Breast epithelium (tissue), 4 donors: ENCODE measurements at regions of chr19 and their contacts with region 1.

Region 1: GRCh38 chr19:15264061-15264932 is 32.0 kb upstream of the EPHX3 start:
- DNase-seq: peak; percentile 59 to 69
- H3K4me3 ChIP-seq: no peak overlapping the region
- H3K27ac ChIP-seq: peak overlapping the region; percentile 33 to 90
- H3K4me1 ChIP-seq: peaks cover 19 to 23% of the 10 kb centered on the region in 2 donors
- H3K27me3 ChIP-seq: no peaks in the 10 kb centered on the region
- CTCF ChIP-seq: peak; percentile 73 to 87 (median 75)
- POLR2A ChIP-seq: no peak

Region 2: DNA sequence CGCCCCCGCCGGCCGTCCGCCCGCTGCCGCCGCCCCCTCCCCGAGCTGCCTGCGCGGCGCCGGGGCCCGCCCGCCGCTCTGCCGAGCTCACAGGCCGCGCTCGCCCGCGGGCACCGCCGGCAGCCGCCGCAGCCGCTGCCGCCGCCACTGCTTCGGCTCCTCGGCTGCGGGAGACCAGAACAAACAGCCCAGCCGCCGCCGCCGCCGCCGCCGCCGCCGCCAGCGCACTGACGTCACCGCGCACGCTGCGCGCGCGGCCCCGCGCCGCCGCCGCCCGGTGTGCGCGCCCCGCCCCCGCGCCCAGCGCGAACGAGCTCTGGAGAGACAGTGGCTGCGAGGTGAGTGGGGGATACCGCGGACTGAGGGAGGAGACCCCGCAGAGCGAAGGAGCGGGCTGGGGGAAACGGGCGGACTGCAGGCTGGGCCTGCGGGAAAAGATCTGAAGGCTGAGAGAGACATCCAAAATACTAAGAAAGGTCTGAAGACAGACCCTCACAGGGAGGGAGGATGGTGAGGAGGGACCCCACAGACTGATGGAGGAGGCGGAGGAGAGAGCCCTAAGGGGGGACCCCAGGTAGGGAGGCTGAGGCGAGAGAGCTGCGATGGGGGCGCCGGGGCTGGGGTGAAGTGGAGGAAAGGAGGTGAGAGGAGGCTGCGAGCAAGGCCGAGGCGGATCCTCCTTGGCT is 68.2 kb after region 1 on chr19 and contains the start of gene BRD4:
- intact Hi-C with region 1: loop called (anchors 10 kb)
- DNase-seq: peak; percentile 50 to 65
- H3K4me3 ChIP-seq: peak within 1 kb of the TSS; percentile 70 to 98 (median 77)
- H3K27ac ChIP-seq: peak within 1 kb of the TSS; percentile 93 to 100
- H3K4me1 ChIP-seq: peaks cover 0 to 22% of the 10 kb centered on the region in 2 donors
- H3K27me3 ChIP-seq: no peaks in the 10 kb centered on the region
- CTCF ChIP-seq: no peak
- POLR2A ChIP-seq: no peak
- total RNA-seq, gene BRD4: 25.6 to 37.5 (median 33.8) TPM

Region 3: DNA sequence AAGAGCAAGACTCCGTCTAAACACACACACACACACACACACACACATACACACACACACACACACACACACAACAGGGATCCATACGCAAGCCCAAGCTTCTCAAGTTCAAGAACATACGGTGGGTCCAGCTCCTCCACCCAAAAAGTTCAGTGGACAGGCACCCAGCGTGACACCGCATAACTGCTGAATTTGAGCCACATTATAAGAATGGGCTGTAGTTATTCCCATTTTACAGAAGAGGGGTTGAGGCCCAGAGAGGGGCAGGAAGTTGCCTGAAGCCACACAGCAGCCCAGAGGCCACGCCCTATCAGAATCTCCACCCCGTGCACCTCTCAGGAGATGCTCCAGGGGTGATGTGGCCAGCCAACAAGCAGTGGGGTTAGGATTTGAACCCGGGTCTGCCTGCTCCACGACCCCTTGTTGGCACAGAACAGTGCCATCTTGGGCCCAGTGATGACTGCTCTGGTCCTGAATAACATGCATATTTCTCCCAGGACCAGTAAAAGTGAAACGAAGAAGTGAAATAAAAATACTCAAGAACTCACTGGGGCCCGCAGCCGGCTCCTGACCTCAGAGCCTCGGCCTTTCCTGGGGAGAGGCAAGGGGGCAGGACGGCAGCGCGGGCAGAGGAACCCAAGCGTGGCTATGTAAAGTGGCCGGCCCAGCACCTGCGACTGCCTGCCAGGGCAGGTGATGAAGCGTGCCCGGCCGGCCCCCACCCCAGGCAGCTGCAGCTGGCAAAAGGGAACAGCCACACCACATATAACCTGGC is 995.3 kb after region 1 on chr19:
- intact Hi-C with region 1: no loop called
- DNase-seq: no peak
- H3K4me3 ChIP-seq: no peak overlapping the region
- H3K27ac ChIP-seq: peak overlapping the region in 1 of 2 donors; percentile 87
- H3K4me1 ChIP-seq: no peaks in the 10 kb centered on the region
- H3K27me3 ChIP-seq: no peaks in the 10 kb centered on the region
- CTCF ChIP-seq: no peak
- POLR2A ChIP-seq: no peak